ENCODE measurements at regions of chr12 and their contacts with region 1.

Region 1: DNA sequence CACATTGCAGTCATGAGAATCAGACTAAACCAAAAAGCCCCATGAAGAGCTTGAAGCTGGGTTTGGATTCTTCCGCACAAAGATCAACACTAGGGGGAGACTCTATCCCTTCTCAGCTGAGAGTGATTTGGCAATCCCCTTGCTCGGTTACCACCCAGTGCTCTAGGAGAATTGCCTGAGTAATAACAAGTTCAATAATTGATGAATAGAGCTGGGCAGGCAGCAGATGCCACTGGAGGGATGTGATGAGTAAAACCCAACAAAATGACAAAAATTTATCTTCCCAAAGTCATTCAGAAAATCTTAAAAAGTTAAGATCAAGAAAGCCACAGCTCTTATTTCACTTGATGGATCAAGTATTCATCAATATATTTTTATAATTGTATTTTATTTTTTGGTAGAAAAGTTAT is 185.6 kb upstream of the ARID2 start:
- DNase-seq: peak; percentile 81
- H3K4me3 Mint-ChIP-seq: no peak overlapping the region
- H3K27ac Mint-ChIP-seq: no peak overlapping the region
- H3K4me1 Mint-ChIP-seq: no peaks in the 10 kb centered on the region
- H3K27me3 Mint-ChIP-seq: no peaks in the 10 kb centered on the region
- CTCF ChIP-seq: peak; percentile 83

Region 2: GRCh38 chr12:44616385-44616784 is 927.5 kb before region 1 on chr12:
- CTCF ChIA-PET with region 1: no interaction called
- POLR2A ChIA-PET with region 1: no interaction called
- intact Hi-C with region 1: no loop called
- DNase-seq: peak; percentile 2
- H3K4me3 Mint-ChIP-seq: no peak overlapping the region
- H3K27ac Mint-ChIP-seq: no peak overlapping the region
- H3K4me1 Mint-ChIP-seq: no peaks in the 10 kb centered on the region
- H3K27me3 Mint-ChIP-seq: peaks cover 58% of the 10 kb centered on the region
- CTCF ChIP-seq: no peak

Region 3: DNA sequence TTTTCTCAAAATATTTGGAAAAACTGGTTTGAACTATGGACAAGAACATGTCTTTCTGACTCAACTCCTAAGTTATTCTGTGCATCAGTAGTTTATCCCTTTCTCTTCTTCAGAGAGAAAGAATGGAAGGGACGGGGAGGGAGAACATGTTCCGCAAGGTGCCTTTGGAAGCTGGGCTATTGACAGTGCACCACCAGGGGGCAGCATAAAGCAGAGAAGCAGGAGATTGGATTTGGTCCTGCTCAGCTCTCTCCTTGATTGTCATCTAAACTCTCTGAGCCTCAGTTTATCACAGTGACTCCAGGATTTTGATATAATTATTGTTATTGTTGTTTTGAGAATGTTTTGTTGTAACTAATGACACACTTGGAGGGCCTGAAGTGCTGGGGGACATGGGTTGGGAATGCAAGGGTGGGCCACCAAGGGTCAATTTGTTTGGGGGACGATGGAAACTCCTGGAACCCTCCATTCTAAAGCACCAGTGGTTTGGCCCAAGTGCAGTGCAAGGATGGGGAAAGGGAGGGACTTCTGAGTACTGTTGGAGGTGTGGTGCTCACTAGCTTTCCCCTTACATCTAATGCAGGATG is 373.4 kb before region 1 on chr12:
- CTCF ChIA-PET with region 1: interaction called, 5 read pairs
- POLR2A ChIA-PET with region 1: no interaction called
- intact Hi-C with region 1: loop called (anchors 5 kb)
- DNase-seq: peak; percentile 84
- H3K4me3 Mint-ChIP-seq: no peak overlapping the region
- H3K27ac Mint-ChIP-seq: no peak overlapping the region
- H3K4me1 Mint-ChIP-seq: no peaks in the 10 kb centered on the region
- H3K27me3 Mint-ChIP-seq: no peaks in the 10 kb centered on the region
- CTCF ChIP-seq: peak; percentile 85

Region 4: GRCh38 chr12:45284131-45284901 is 259.6 kb before region 1 on chr12:
- CTCF ChIA-PET with region 1: no interaction called
- POLR2A ChIA-PET with region 1: no interaction called
- intact Hi-C with region 1: no loop called
- DNase-seq: no peak
- H3K4me3 Mint-ChIP-seq: no peak overlapping the region
- H3K27ac Mint-ChIP-seq: peak overlapping the region; percentile 47
- H3K4me1 Mint-ChIP-seq: peaks cover 18% of the 10 kb centered on the region
- H3K27me3 Mint-ChIP-seq: no peaks in the 10 kb centered on the region
- CTCF ChIP-seq: no peak

Region 5: DNA sequence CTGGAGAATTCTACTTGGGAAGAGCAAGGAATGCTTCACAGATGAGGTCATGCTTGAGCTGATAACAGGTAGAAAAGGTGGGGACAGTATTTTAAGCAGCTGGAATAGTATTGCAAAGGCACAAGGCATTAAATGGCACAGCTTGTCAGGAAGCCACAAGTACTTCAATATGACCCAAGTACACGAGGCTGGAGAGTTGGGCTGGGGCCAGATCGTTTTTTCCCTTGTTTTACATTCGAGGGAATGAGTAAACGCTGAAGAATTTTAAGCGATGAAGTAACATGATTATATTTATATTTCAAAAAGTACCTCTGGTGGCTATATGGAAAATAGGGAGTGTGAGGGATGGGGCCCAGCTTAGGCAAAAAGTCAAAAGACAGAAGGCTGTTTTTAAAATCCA is 130.7 kb after region 1 on chr12:
- CTCF ChIA-PET with region 1: interaction called, 10 read pairs
- POLR2A ChIA-PET with region 1: no interaction called
- intact Hi-C with region 1: no loop called
- DNase-seq: peak; percentile 92
- H3K4me3 Mint-ChIP-seq: no peak overlapping the region
- H3K27ac Mint-ChIP-seq: no peak overlapping the region
- H3K4me1 Mint-ChIP-seq: peaks cover 7% of the 10 kb centered on the region
- H3K27me3 Mint-ChIP-seq: no peaks in the 10 kb centered on the region
- CTCF ChIP-seq: no peak

Region 6: GRCh38 chr12:45721954-45722353 is 178.0 kb after region 1 on chr12:
- CTCF ChIA-PET with region 1: interaction called, 97 read pairs
- POLR2A ChIA-PET with region 1: interaction called, 83 read pairs
- intact Hi-C with region 1: loop called (anchors 1 kb)
- DNase-seq: no peak
- H3K4me3 Mint-ChIP-seq: no peak overlapping the region
- H3K27ac Mint-ChIP-seq: no peak overlapping the region
- H3K4me1 Mint-ChIP-seq: peaks cover 11% of the 10 kb centered on the region
- H3K27me3 Mint-ChIP-seq: no peaks in the 10 kb centered on the region
- CTCF ChIP-seq: no peak

Region 7: GRCh38 chr12:45756666-45757065 is 212.8 kb after region 1 on chr12:
- CTCF ChIA-PET with region 1: interaction called, 11 read pairs
- POLR2A ChIA-PET with region 1: no interaction called
- intact Hi-C with region 1: no loop called
- DNase-seq: no peak
- H3K4me3 Mint-ChIP-seq: no peak overlapping the region
- H3K27ac Mint-ChIP-seq: no peak overlapping the region
- H3K4me1 Mint-ChIP-seq: peaks cover 13% of the 10 kb centered on the region
- H3K27me3 Mint-ChIP-seq: no peaks in the 10 kb centered on the region
- CTCF ChIP-seq: no peak

Region 8: DNA sequence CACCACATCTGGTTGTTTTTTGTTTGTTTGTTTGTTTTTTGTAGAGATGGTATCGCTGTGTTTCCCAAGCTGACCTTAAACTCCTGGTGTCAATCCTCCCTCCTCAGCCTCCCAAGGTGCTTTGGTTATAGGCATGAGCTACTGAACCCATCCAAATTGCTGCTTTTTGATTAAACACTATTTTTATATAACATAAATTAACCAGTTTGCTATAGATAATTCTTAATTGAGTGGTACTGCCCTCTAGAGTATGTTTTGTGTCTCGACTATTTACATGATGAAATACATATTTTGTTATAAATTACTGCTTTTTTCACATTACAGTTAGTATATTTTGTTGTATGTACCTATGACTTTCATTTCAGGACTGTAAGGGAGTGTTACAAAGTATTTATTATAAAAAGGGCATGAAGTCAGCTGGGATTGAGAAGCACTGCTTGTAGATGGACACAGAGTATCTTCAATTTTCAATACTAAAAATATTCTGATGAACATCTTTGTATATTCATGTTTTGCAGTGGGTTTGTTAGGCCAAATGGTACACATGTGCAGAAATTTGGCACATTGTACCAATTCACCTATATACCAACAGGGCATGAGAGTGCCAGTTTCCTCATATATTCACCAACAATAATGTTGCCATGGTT is 461.4 kb after region 1 on chr12:
- CTCF ChIA-PET with region 1: interaction called, 3 read pairs
- POLR2A ChIA-PET with region 1: no interaction called
- intact Hi-C with region 1: loop called (anchors 5 kb)
- DNase-seq: peak; percentile 8
- H3K4me3 Mint-ChIP-seq: no peak overlapping the region
- H3K27ac Mint-ChIP-seq: no peak overlapping the region
- H3K4me1 Mint-ChIP-seq: no peaks in the 10 kb centered on the region
- H3K27me3 Mint-ChIP-seq: peaks cover 8% of the 10 kb centered on the region
- CTCF ChIP-seq: peak; percentile 31